Adrenal gland (tissue), 19 donors: ENCODE measurements at regions of chr10 and their contacts with region 1.

Region 1: GRCh38 chr10:89793649-89794254 is 92.4 kb downstream of the KIF20B start:
- DNase-seq: peak; percentile 17 to 64 (median 37)
- H3K4me3 ChIP-seq: no peak overlapping the region
- H3K27ac ChIP-seq: no peak overlapping the region
- H3K4me1 ChIP-seq: no peaks in the 10 kb centered on the region
- H3K27me3 ChIP-seq: no peaks in the 10 kb centered on the region
- CTCF ChIP-seq: peak; percentile 61 to 85 (median 72)
- POLR2A ChIP-seq: no peak

Region 2: GRCh38 chr10:89615824-89616223 is 177.9 kb before region 1 on chr10:
- intact Hi-C with region 1: no loop called
- DNase-seq: no peak
- H3K4me3 ChIP-seq: no peak overlapping the region
- H3K27ac ChIP-seq: no peak overlapping the region
- H3K4me1 ChIP-seq: no peaks in the 10 kb centered on the region
- H3K27me3 ChIP-seq: no peaks in the 10 kb centered on the region
- CTCF ChIP-seq: no peak
- POLR2A ChIP-seq: no peak

Region 3: DNA sequence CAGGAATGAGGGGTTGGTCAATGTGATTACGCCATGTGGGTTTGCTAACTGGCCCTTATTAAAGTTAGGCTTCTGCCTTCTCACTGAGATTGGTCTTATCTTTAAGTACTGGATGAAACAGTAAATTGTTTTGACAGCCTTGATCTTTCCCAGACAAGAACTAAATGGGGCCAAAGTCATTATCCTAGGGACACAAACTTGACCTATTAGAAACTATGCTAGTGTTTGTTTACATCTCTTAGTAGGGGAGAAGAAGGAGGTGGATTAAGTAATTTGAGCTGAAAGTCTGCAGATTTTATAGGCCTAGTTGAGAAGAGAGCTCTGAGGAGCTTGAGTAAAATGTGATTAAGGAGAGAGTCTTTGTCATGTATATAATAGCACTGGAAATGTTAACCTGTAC is 677.2 kb after region 1 on chr10:
- intact Hi-C with region 1: no loop called
- DNase-seq: no peak
- H3K4me3 ChIP-seq: no peak overlapping the region
- H3K27ac ChIP-seq: no peak overlapping the region
- H3K4me1 ChIP-seq: no peaks in the 10 kb centered on the region
- H3K27me3 ChIP-seq: no peaks in the 10 kb centered on the region
- CTCF ChIP-seq: no peak
- POLR2A ChIP-seq: no peak

Region 4: GRCh38 chr10:90787393-90788198 is 993.8 kb after region 1 on chr10:
- intact Hi-C with region 1: loop called in 1 of 2 experiments (anchors 10 kb)
- DNase-seq: peak in 6 of 7 donors; percentile 28 to 65 (median 44)
- H3K4me3 ChIP-seq: no peak overlapping the region
- H3K27ac ChIP-seq: no peak overlapping the region
- H3K4me1 ChIP-seq: no peaks in the 10 kb centered on the region
- H3K27me3 ChIP-seq: peaks cover 4% of the 10 kb centered on the region
- CTCF ChIP-seq: peak; percentile 50 to 80 (median 56)
- POLR2A ChIP-seq: no peak